ENCODE measurements at regions of chr1 and their contacts with region 1.

Region 1: GRCh38 chr1:235513495-235514366 is 9.5 kb upstream of the B3GALNT2 start:
- DNase-seq: peak; percentile 8 to 9
- H3K4me3 ChIP-seq: no peak overlapping the region
- H3K27ac ChIP-seq: no peak overlapping the region
- H3K4me1 ChIP-seq: no peaks in the 10 kb centered on the region
- H3K27me3 ChIP-seq: no peaks in the 10 kb centered on the region
- CTCF ChIP-seq: peak; percentile 63 to 92 (median 80)
- POLR2A ChIP-seq: no peak

Region 2: DNA sequence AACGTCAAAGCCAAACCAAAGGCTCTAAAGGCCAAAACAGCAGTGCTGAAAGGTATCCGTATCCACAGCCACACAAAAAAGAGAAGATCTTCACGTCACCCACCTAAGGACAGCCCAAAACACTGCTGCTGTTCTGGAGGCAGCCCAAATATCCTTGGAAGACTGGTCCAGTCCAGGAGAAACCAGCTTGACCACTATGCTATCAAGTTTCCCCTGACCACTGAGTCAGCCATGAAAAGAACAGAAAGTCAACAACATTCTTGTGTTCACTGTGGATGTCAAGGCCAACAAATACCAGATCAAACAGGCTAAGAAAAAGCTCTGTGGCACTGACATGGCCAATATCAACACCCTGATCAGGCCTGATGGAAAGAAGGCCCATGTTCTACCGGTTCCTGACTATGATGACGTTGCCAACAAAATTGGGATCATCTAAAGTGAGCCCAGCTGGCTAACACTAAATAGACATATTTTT is 217.8 kb before region 1 on chr1:
- intact Hi-C with region 1: no loop called
- DNase-seq: peak; percentile 66 to 72
- H3K4me3 ChIP-seq: no peak overlapping the region
- H3K27ac ChIP-seq: peak overlapping the region; percentile 73 to 83 (median 78)
- H3K4me1 ChIP-seq: peaks cover 21% of the 10 kb centered on the region in 2 donors
- H3K27me3 ChIP-seq: no peaks in the 10 kb centered on the region
- CTCF ChIP-seq: no peak
- POLR2A ChIP-seq: no peak

Region 3: GRCh38 chr1:235783148-235783776 is 269.5 kb after region 1 on chr1:
- intact Hi-C with region 1: loop called (anchors 10 kb)
- DNase-seq: no peak
- H3K4me3 ChIP-seq: no peak overlapping the region
- H3K27ac ChIP-seq: peak overlapping the region in 1 of 3 donors; percentile 19
- H3K4me1 ChIP-seq: no peaks in the 10 kb centered on the region
- H3K27me3 ChIP-seq: no peaks in the 10 kb centered on the region
- CTCF ChIP-seq: peak in 5 of 6 experiments; percentile 32 to 61 (median 53)
- POLR2A ChIP-seq: no peak

Region 4: GRCh38 chr1:235971571-235972310 is 458.0 kb after region 1 on chr1:
- intact Hi-C with region 1: loop called (anchors 10 kb)
- DNase-seq: peak; percentile 86 to 90
- H3K4me3 ChIP-seq: peak overlapping the region in 1 of 3 donors; percentile 21
- H3K27ac ChIP-seq: peak overlapping the region; percentile 77 to 89 (median 83)
- H3K4me1 ChIP-seq: peaks cover 4 to 5% of the 10 kb centered on the region in 2 donors
- H3K27me3 ChIP-seq: no peaks in the 10 kb centered on the region
- CTCF ChIP-seq: peak; percentile 51 to 88 (median 76)
- POLR2A ChIP-seq: peak in 1 of 2 donors; percentile 22

Measured in thyroid gland (tissue), 4 donors.